ENCODE measurements at regions of chr21 and their contacts with region 1.

Region 1: DNA sequence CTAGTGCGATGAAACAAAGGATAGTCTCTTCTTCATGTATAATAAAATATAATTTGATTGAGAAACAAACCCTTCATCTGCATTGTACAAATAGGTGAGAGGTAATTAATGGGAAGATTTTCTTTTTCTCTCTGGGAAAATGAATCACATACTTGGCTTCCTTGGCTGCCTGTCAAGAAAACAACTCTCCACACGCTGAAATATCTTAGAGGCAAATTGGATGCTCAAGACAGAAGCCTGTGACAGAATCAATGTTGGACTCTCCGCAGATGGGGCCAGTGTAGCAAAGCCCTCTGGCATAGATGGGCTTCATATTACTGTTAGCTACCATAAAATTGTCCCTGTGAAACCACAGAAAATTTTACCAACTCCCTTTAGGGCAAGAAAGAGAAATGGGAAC is 186.6 kb downstream of the GRIK1 start:
- DNase-seq: no peak
- ATAC-seq: no peak
- H3K4me3 ChIP-seq: no peak overlapping the region
- H3K27ac ChIP-seq: no peak overlapping the region
- H3K4me1 ChIP-seq: no peaks in the 10 kb centered on the region
- H3K27me3 ChIP-seq: peaks cover 4% of the 10 kb centered on the region; the same call in 1 of the 2 replicates
- CTCF ChIP-seq: no peak
- POLR2A ChIP-seq: no peak
- RAD21 ChIP-seq: no peak

Region 2: DNA sequence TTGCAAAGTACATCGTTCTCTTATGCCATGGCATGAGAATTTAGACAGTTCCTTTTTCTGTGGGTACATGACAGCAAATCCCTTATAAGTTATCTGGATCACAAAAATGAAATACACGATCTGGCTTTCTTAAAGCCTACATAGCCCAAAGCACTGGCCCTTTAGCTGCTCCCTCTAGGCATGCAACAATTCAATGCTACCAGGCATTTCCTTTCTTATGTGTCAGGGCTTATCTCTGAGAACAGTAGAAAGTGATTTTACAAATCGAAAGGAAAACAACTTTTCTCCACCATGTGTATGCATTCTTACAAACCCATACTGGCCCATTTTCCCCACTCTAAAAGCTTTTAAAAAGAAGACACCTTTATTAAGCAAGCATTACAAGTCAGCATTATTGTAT is 46.8 kb after region 1 on chr21:
- CTCF ChIA-PET with region 1: no interaction called
- POLR2A ChIA-PET with region 1: no interaction called
- dilution Hi-C with region 1: no loop called
- in situ Hi-C with region 1: no loop called
- intact Hi-C with region 1: loop called (anchors 1 kb)
- DNase-seq: no peak
- ATAC-seq: no peak
- H3K4me3 ChIP-seq: no peak overlapping the region
- H3K27ac ChIP-seq: no peak overlapping the region
- H3K4me1 ChIP-seq: no peaks in the 10 kb centered on the region
- H3K27me3 ChIP-seq: peaks cover 1% of the 10 kb centered on the region; the same call in 1 of the 2 replicates
- CTCF ChIP-seq: no peak
- POLR2A ChIP-seq: no peak
- RAD21 ChIP-seq: no peak

Region 3: DNA sequence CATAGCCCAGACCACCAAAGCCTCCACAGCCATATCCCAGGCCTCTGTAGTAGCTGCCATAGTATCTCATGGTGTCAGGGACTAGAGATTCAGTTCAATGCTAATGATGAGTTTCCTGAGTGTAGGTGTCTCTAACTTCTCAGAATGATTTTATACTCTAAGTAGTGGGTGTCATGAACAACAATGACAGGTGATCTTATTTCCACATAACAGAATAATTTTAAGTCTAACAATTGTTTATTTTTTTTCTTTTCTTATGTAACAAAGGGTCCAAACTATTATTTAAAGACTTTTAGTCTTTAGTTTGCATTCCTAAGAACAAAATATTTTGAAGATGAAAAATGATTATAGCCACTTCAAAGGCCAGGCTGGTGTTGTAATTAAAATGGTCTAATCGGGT is 788.5 kb after region 1 on chr21 and contains the start of gene KRTAP19-6:
- CTCF ChIA-PET with region 1: no interaction called
- POLR2A ChIA-PET with region 1: no interaction called
- dilution Hi-C with region 1: no loop called
- in situ Hi-C with region 1: no loop called
- intact Hi-C with region 1: no loop called
- DNase-seq: no peak
- ATAC-seq: no peak
- H3K4me3 ChIP-seq: no peak within 1 kb of the TSS
- H3K27ac ChIP-seq: no peak within 1 kb of the TSS
- H3K4me1 ChIP-seq: no peaks in the 10 kb centered on the region
- H3K27me3 ChIP-seq: no peaks in the 10 kb centered on the region
- CTCF ChIP-seq: no peak
- POLR2A ChIP-seq: no peak
- RAD21 ChIP-seq: no peak
- total RNA-seq, gene KRTAP19-6: not detected in 2 replicates